T-cell (primary cell): ENCODE measurements at regions of chr12 and their contacts with region 1.

Region 1: GRCh38 chr12:56206457-56207166 is 15.1 kb downstream of the RNF41 start:
- DNase-seq: peak in 19 of 35 experiments; percentile 16 to 52 (median 26)
- ATAC-seq: peak; percentile 48 to 72 (median 63)
- H3K4me3 ChIP-seq: no peak overlapping the region
- H3K4me3 Mint-ChIP-seq: no peak overlapping the region
- H3K27ac ChIP-seq: no peak overlapping the region
- H3K27ac Mint-ChIP-seq: peak overlapping the region; percentile 22 to 45
- H3K4me1 ChIP-seq: no peaks in the 10 kb centered on the region
- H3K4me1 Mint-ChIP-seq: peaks cover 0 to 7% (median 1%) of the 10 kb centered on the region in 3 donors
- H3K27me3 ChIP-seq: no peaks in the 10 kb centered on the region
- H3K27me3 Mint-ChIP-seq: no peaks in the 10 kb centered on the region

Region 2: DNA sequence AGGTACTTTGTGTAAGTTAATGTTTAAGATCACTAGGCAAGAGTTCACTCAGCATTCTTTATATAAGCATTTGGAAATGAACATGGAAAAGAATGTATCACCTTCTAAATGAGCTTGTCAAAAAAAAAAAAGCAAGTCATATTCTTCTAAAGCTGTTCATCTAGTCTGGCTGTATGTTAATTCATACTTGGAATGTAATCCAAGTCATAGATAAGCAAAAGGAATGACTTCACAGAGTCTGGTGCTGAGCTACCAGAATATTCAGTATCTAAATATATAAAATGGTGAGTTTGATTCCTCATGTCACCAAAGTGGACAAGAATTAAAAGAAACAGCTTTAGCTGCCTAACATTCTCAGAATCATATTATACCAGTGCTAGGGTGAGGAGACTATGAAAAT is 652.3 kb before region 1 on chr12:
- CTCF ChIA-PET with region 1: no interaction called
- POLR2A ChIA-PET with region 1: no interaction called
- DNase-seq: no peak
- ATAC-seq: no peak
- H3K4me3 ChIP-seq: no peak overlapping the region
- H3K4me3 Mint-ChIP-seq: no peak overlapping the region
- H3K27ac ChIP-seq: no peak overlapping the region
- H3K27ac Mint-ChIP-seq: no peak overlapping the region
- H3K4me1 ChIP-seq: no peaks in the 10 kb centered on the region
- H3K4me1 Mint-ChIP-seq: no peaks in the 10 kb centered on the region
- H3K27me3 ChIP-seq: peaks cover 2 to 4% of the 10 kb centered on the region in 2 experiments
- H3K27me3 Mint-ChIP-seq: peaks cover 18 to 24% of the 10 kb centered on the region in 2 donors

Region 3: DNA sequence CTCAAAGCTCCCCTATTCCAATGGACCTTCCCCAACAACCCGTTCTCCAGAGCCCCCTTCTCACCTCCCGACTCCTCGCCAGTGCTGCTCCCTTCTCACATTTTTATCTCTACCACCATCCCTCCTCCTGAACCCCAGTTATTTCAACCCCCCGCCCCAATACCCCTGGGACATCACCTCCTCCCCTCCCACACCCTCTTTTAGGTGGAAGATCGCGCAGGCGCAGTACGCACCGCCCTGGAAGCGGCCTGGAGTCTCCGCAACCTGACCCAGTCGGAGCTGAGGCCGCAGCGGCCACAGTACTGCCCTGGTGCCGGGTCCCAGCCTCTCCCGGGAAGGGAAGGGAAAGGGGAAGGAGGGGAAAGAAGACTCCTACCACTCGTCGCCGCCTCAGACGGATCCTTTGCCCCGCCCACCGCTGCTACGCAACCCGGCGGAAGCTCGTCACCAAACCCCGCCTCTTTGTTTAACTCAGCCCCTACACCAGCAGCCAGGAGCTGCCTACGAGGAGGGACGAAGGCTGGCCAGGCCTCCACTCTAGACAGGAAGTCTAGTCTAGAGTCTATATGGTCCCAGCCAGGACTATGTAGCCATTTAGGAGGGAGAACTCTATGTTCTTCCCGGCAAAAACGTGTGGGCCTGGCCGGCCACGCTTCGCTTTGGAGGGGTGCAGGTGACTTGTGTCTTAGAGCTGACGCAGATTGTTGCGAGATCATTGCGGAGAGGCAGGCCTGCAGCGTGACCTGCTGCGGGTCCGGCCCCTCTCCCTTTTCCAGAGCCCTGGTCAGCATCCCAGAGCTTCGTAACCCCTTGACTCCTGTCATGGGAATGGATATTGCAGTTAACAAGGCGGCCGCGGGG is 15.1 kb after region 1 on chr12 and contains the start of gene RNF41:
- CTCF ChIA-PET with region 1: interaction called, 5 to 21 read pairs
- POLR2A ChIA-PET with region 1: no interaction called
- DNase-seq: peak; percentile 80 to 96 (median 89)
- ATAC-seq: peak; percentile 81 to 85 (median 82)
- H3K4me3 ChIP-seq: peak within 1 kb of the TSS; percentile 98
- H3K4me3 Mint-ChIP-seq: peak within 1 kb of the TSS; percentile 98 to 100 (median 98)
- H3K27ac ChIP-seq: peak within 1 kb of the TSS; percentile 94
- H3K27ac Mint-ChIP-seq: peak within 1 kb of the TSS; percentile 98 to 99
- H3K4me1 ChIP-seq: peaks cover 18 to 54% of the 10 kb centered on the region in 2 experiments
- H3K4me1 Mint-ChIP-seq: peaks cover 47 to 52% (median 49%) of the 10 kb centered on the region in 3 donors
- H3K27me3 ChIP-seq: no peaks in the 10 kb centered on the region
- H3K27me3 Mint-ChIP-seq: no peaks in the 10 kb centered on the region
- total RNA-seq, gene RNF41: 26.3 to 43.1 (median 39.4) TPM